ENCODE measurements at regions of chr13 and their contacts with region 1.

Region 1: GRCh38 chr13:113562085-113562749 is 22.3 kb upstream of the TFDP1 start:
- DNase-seq: peak; percentile 63 to 64
- ATAC-seq: peak; percentile 48 to 81 (median 77)
- H3K4me3 ChIP-seq: no peak overlapping the region
- H3K27ac ChIP-seq: no peak overlapping the region
- H3K4me1 ChIP-seq: peaks cover 0 to 7% (median 0%) of the 10 kb centered on the region in 9 donors
- H3K27me3 ChIP-seq: peaks cover 0 to 8% (median 0%) of the 10 kb centered on the region in 7 donors
- CTCF ChIP-seq: peak; percentile 44 to 82 (median 77)

Region 2: DNA sequence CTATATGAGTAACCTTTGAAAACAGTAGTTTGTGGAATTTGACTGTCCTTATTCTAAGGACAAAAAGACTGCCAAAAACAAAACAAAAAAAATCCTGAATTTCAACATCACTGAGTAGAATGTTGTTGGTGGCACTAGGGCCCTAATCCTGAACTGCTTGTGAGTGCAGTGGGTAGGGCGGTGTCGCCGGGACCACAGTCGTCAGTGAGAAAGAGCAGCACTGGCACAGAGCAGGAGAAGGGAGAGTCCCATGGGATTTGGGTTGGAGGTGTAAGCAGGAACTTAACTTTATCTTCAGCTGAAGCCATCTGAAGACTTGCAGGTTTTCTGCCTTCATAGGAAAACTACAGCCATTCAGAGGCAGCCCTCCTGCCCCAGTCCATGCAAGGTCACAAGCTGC is 359.3 kb before region 1 on chr13:
- intact Hi-C with region 1: no loop called
- DNase-seq: no peak
- ATAC-seq: peak in 4 of 8 donors; percentile 21 to 58 (median 38)
- H3K4me3 ChIP-seq: no peak overlapping the region
- H3K27ac ChIP-seq: peak overlapping the region in 9 of 10 donors; percentile 33 to 88 (median 75)
- H3K4me1 ChIP-seq: peaks cover 8 to 71% (median 59%) of the 10 kb centered on the region in 9 donors
- H3K27me3 ChIP-seq: no peaks in the 10 kb centered on the region
- CTCF ChIP-seq: no peak

Region 3: GRCh38 chr13:113458253-113459065 is 103.8 kb before region 1 on chr13:
- intact Hi-C with region 1: loop called (anchors 1 to 10 kb)
- DNase-seq: peak in 1 of 2 donors; percentile 43
- ATAC-seq: peak; percentile 31 to 76 (median 61)
- H3K4me3 ChIP-seq: no peak overlapping the region
- H3K27ac ChIP-seq: peak overlapping the region in 8 of 10 donors; percentile 13 to 71 (median 44)
- H3K4me1 ChIP-seq: peaks cover 0 to 58% (median 10%) of the 10 kb centered on the region in 9 donors
- H3K27me3 ChIP-seq: no peaks in the 10 kb centered on the region
- CTCF ChIP-seq: peak in 8 of 9 donors; percentile 42 to 63 (median 52)

Region 4: GRCh38 chr13:113518076-113518803 is 44.0 kb before region 1 on chr13:
- intact Hi-C with region 1: loop called in 1 of 10 experiments (anchors 10 kb)
- DNase-seq: no peak
- ATAC-seq: no peak
- H3K4me3 ChIP-seq: no peak overlapping the region
- H3K27ac ChIP-seq: no peak overlapping the region
- H3K4me1 ChIP-seq: no peaks in the 10 kb centered on the region
- H3K27me3 ChIP-seq: no peaks in the 10 kb centered on the region
- CTCF ChIP-seq: no peak